ENCODE measurements at regions of chr2 and their contacts with region 1.

Region 1: GRCh38 chr2:183124222-183124956 is at the start of gene NUP35:
- DNase-seq: peak; percentile 78 to 94 (median 88)
- H3K4me3 ChIP-seq: peak within 1 kb of the TSS; percentile 60 to 99 (median 89)
- H3K27ac ChIP-seq: peak within 1 kb of the TSS in 58 of 59 donors; percentile 27 to 96 (median 86)
- H3K27me3 ChIP-seq: no peaks in the 10 kb centered on the region
- CTCF ChIP-seq: peak in 15 of 56 donors; percentile 6 to 42 (median 20)
- total RNA-seq, gene NUP35: 10.5 to 27.4 (median 17.8) TPM

Region 2: DNA sequence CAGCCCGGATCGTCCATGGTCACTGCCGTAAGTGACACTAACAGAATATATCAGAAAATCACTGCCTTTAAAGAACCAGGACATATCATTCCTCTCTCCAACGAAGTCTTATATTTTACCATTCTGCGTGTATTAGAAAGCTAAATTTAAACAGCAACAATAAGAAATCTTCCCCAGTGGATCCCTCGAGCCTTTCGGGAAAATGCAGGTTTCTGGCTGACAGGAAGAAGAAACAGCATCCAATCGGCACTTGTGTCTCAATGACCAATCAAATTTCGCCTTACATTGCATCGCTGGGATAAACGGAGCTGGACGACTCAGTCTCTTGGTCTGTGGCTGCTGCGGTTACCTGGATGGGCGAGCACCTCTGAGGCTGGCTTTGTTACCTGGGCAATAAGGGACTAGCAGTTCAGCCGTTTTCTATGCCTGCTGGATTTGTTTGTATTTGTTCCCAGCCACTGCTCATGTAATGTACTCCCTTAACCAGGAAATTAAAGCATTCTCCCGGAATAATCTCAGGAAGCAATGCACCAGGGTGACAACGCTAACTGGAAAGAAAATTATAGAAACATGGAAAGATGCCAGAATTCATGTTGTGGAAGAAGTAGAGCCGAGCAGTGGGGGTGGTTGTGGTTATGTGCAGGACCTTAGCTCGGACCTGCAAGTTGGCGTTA is 45.8 kb before region 1 on chr2 and contains the start of gene DUSP19:
- intact Hi-C with region 1: loop called in 1 of 2 experiments (anchors 1 kb)
- DNase-seq: peak; percentile 58 to 97 (median 90)
- H3K4me3 ChIP-seq: peak within 1 kb of the TSS; percentile 57 to 96 (median 80)
- H3K27ac ChIP-seq: peak within 1 kb of the TSS; percentile 51 to 99 (median 88)
- H3K27me3 ChIP-seq: no peaks in the 10 kb centered on the region
- CTCF ChIP-seq: peak in 16 of 56 donors; percentile 2 to 29 (median 16)
- total RNA-seq, gene DUSP19: 5.2 to 20.4 (median 11.3) TPM

Region 3: DNA sequence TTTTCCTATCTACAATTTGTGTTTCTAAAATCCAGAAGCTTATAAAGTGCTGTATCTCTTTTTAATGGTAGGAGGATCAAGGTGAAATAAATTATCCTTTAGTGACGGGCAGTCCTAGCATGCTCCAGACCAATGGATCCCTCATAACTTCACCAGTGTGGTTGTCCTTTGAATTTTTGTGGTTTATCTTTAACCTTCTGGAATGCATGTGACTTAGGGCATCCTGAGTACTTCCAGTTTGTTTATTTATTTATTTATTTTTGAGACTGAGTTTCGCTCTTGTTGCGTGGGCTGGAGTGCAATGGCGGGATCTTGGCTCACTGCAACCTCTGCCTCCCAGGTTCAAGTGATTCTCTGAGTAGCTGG is 40.2 kb after region 1 on chr2:
- intact Hi-C with region 1: no loop called
- DNase-seq: no peak
- H3K4me3 ChIP-seq: no peak overlapping the region
- H3K27ac ChIP-seq: no peak overlapping the region
- H3K27me3 ChIP-seq: no peaks in the 10 kb centered on the region
- CTCF ChIP-seq: no peak